ENCODE measurements at regions of chr9 and their contacts with region 1.

Region 1: GRCh38 chr9:109817846-109818472 is 38.0 kb downstream of the PALM2AKAP2 start:
- DNase-seq: peak; percentile 67
- ATAC-seq: peak; percentile 71
- H3K4me3 Mint-ChIP-seq: no peak overlapping the region
- H3K27ac Mint-ChIP-seq: no peak overlapping the region
- H3K4me1 Mint-ChIP-seq: no peaks in the 10 kb centered on the region
- H3K27me3 Mint-ChIP-seq: peaks cover 16% of the 10 kb centered on the region

Region 2: DNA sequence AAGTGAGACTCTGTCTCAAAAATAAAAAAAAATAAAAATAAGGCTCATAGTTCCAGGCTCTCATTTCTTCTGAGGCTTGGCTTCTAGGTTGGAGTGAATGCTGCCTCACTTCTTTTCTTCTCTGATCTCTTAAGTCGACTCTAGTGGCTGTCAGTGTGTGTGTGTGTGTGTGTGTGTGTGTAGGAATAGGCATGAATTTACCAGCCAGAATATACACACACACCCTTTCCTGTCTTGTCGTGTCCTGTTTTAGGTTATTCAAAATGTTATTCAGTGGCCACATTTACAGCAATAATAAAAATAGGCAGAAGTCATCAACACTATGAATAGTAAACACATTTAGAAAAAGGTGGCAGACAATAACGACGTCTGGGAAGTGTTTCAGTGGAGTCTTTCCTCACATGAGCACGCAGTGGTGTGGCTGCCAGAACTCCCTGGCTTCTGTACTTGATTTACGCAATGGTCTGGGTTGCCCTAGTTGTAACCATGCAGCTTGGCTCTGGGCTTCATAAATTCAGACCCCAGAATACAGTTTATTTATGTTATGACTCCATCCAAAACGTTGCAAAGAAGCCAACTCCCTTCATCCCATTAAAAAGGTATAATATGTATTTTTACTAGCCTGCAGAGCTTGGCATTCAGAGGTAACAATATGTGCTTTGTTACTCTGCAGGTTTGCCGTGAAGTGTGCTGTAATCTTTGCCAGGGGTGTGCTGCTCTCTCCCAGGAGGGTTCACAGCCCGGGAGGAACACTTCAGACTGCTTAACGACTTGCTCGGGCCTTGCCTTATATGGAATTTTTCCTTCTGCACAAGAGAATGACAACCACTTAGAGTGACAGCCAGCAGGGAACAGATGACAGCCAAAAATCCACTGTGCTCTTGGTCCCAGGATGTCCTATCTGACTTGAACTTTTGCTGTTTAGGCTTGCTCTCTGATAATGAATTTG is 72.3 kb before region 1 on chr9:
- CTCF ChIA-PET with region 1: no interaction called
- POLR2A ChIA-PET with region 1: no interaction called
- intact Hi-C with region 1: no loop called
- DNase-seq: no peak
- ATAC-seq: no peak
- H3K4me3 Mint-ChIP-seq: no peak overlapping the region
- H3K27ac Mint-ChIP-seq: no peak overlapping the region
- H3K4me1 Mint-ChIP-seq: no peaks in the 10 kb centered on the region
- H3K27me3 Mint-ChIP-seq: peaks cover 20% of the 10 kb centered on the region

Region 3: DNA sequence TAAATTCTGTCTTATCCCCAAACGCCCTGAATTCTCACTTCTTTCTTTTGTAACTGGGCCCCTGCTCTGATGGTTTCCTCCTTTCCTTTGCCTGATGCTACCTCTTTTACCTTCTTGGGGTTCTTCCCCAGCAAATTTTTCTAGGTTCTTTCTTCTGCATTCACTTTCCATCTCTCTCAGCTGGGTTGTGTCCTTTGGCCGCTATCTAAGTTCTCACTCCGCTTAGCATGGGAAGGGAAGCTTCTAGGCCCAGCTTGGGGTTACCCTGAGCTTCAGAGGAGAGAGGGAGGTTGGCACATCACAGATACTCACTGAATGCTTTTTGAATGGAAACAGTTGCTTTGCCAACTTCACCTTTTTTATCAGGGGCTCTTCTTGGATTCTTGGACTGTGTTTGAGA is 21.0 kb before region 1 on chr9:
- CTCF ChIA-PET with region 1: interaction called, 10 read pairs
- POLR2A ChIA-PET with region 1: no interaction called
- intact Hi-C with region 1: no loop called
- DNase-seq: no peak
- ATAC-seq: no peak
- H3K4me3 Mint-ChIP-seq: no peak overlapping the region
- H3K27ac Mint-ChIP-seq: no peak overlapping the region
- H3K4me1 Mint-ChIP-seq: no peaks in the 10 kb centered on the region
- H3K27me3 Mint-ChIP-seq: peaks cover 9% of the 10 kb centered on the region

Measured in activated CD4-positive, alpha-beta T cell treated with anti-CD3 and anti-CD28 coated beads for 36 hours (primary cell).